Activated CD4-positive, alpha-beta memory T cell treated with anti-CD3 and anti-CD28 coated beads for 36 hours (primary cell): ENCODE measurements at regions of chr1 and their contacts with region 1.

Region 1: GRCh38 chr1:64923294-64923721 is 43.0 kb downstream of the JAK1 start:
- DNase-seq: peak; percentile 64
- H3K4me3 Mint-ChIP-seq: no peak overlapping the region
- H3K27ac Mint-ChIP-seq: peak overlapping the region; percentile 73
- H3K4me1 Mint-ChIP-seq: peaks cover 94% of the 10 kb centered on the region
- H3K27me3 Mint-ChIP-seq: no peaks in the 10 kb centered on the region

Region 2: GRCh38 chr1:64864018-64864940 is 59.0 kb before region 1 on chr1:
- CTCF ChIA-PET with region 1: no interaction called
- POLR2A ChIA-PET with region 1: no interaction called
- intact Hi-C with region 1: no loop called
- DNase-seq: peak; percentile 64
- H3K4me3 Mint-ChIP-seq: no peak overlapping the region
- H3K27ac Mint-ChIP-seq: peak overlapping the region; percentile 59
- H3K4me1 Mint-ChIP-seq: peaks cover 34% of the 10 kb centered on the region
- H3K27me3 Mint-ChIP-seq: no peaks in the 10 kb centered on the region

Region 3: GRCh38 chr1:64898107-64898845 is 25.0 kb before region 1 on chr1:
- CTCF ChIA-PET with region 1: interaction called, 3 read pairs
- POLR2A ChIA-PET with region 1: interaction called, 7 read pairs
- intact Hi-C with region 1: loop called (anchors 2 kb)
- DNase-seq: peak; percentile 61
- H3K4me3 Mint-ChIP-seq: no peak overlapping the region
- H3K27ac Mint-ChIP-seq: peak overlapping the region; percentile 11
- H3K4me1 Mint-ChIP-seq: peaks cover 92% of the 10 kb centered on the region
- H3K27me3 Mint-ChIP-seq: no peaks in the 10 kb centered on the region

Region 4: DNA sequence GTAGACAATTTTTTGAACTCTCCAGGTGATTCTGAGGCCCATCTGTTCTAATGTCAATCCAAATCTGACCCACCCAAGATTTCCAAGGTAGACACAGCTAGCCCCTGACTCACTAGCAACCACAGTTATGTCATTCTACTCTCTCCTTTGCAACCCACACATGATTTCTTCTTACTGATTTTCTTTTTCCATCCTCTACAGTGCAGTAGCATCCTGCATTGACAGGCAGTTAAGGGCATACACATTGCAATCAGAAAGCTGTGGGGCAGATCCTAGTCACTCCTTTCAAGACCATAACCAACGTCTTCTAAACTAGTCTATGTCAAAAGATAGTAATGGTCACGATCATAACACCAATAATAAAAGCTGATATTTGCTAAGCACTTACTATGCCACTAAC is 11.1 kb before region 1 on chr1:
- CTCF ChIA-PET with region 1: interaction called, 11 read pairs
- POLR2A ChIA-PET with region 1: interaction called, 17 read pairs
- intact Hi-C with region 1: loop called (anchors 1 kb)
- DNase-seq: peak; percentile 25
- H3K4me3 Mint-ChIP-seq: no peak overlapping the region
- H3K27ac Mint-ChIP-seq: no peak overlapping the region
- H3K4me1 Mint-ChIP-seq: peaks cover 84% of the 10 kb centered on the region
- H3K27me3 Mint-ChIP-seq: no peaks in the 10 kb centered on the region

Region 5: GRCh38 chr1:64956733-64957441 is 33.6 kb after region 1 on chr1:
- CTCF ChIA-PET with region 1: interaction called, 7 read pairs
- POLR2A ChIA-PET with region 1: interaction called, 35 read pairs
- intact Hi-C with region 1: loop called (anchors 1 kb)
- DNase-seq: peak; percentile 76
- H3K4me3 Mint-ChIP-seq: no peak overlapping the region
- H3K27ac Mint-ChIP-seq: no peak overlapping the region
- H3K4me1 Mint-ChIP-seq: peaks cover 59% of the 10 kb centered on the region
- H3K27me3 Mint-ChIP-seq: no peaks in the 10 kb centered on the region

Region 6: GRCh38 chr1:65002508-65003315 is 79.4 kb after region 1 on chr1:
- CTCF ChIA-PET with region 1: no interaction called
- POLR2A ChIA-PET with region 1: interaction called, 3 read pairs
- intact Hi-C with region 1: loop called (anchors 2 kb)
- DNase-seq: peak; percentile 82
- H3K4me3 Mint-ChIP-seq: peak overlapping the region; percentile 76
- H3K27ac Mint-ChIP-seq: peak overlapping the region; percentile 84
- H3K4me1 Mint-ChIP-seq: peaks cover 23% of the 10 kb centered on the region
- H3K27me3 Mint-ChIP-seq: no peaks in the 10 kb centered on the region

Region 7: DNA sequence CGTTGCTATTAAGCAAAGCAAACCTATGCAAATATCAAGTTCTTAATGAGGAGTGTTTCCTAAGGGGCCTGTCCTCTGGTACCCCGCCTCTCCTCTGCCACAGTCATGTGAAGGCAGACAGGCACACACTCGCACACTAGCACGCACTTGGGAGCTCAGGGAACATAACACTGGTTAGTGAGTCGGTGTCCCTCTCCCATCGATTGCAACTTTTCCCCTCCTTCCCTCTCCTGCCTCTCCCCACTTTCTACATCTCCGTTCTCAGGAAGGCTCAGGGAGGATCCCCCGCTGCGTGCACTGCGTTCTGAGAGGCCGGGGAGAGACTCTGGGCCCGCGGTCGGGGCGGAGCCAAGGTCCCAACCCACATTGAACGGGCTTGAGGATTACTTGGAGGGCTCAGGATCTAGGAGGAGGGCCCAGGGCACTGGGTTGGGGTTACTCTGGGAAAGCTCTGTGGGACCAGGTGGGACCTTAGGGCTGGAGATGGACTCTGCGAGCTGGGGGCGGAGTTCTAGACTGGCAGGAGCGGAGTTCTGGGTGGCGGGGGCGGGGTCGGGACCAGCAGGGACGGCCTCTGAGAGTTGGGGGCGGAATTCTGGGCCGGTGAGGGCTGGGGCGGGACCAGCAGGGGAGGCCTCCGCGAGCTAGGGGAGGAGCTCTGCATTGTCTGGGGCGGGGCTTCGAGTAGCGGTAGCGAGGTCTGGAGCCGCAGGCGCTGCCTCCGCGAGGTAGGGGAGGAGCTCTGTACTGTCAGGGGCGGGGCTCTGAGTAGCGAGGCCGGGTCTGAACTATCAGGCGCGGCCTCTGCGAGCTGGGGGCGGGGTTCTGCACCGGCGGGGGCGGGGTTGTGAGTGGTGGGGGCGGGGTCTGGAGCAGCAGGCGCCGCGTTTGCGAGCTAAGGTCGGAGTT is 496.6 kb after region 1 on chr1:
- CTCF ChIA-PET with region 1: no interaction called
- POLR2A ChIA-PET with region 1: no interaction called
- intact Hi-C with region 1: loop called (anchors 5 kb)
- DNase-seq: peak; percentile 99
- H3K4me3 Mint-ChIP-seq: peak overlapping the region; percentile 90
- H3K27ac Mint-ChIP-seq: peak overlapping the region; percentile 88
- H3K4me1 Mint-ChIP-seq: peaks cover 21% of the 10 kb centered on the region
- H3K27me3 Mint-ChIP-seq: no peaks in the 10 kb centered on the region